ENCODE measurements at regions of chr1 and their contacts with region 1.

Region 1: GRCh38 chr1:32485554-32486255 is 20.8 kb downstream of the ZBTB8B start:
- DNase-seq: no peak
- ATAC-seq: no peak
- H3K4me3 ChIP-seq: no peak overlapping the region
- H3K27ac ChIP-seq: no peak overlapping the region
- H3K4me1 ChIP-seq: peaks cover 12% of the 10 kb centered on the region
- H3K27me3 ChIP-seq: no peaks in the 10 kb centered on the region
- CTCF ChIP-seq: no peak

Region 2: DNA sequence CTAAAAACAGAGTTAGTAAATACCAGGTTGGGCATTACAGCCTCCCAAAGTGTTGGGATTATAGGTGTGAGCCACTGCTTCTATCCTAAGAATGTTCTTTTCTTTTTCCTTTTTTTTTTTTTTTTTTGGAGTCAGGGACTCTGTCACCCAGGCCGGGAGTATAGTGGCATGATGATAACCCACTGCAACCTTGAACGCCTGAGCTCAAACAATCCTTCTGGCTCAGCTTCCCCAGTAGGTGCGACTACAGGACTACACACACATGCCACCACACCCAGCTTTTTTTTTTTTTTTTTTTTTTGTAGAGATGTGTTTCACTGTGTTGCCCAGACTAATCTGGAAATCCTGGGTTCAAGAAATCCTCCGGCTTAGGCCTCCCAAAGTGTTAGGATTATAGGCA is 158.7 kb after region 1 on chr1:
- CTCF ChIA-PET with region 1: interaction called, 13 read pairs
- POLR2A ChIA-PET with region 1: no interaction called
- intact Hi-C with region 1: no loop called
- DNase-seq: no peak
- ATAC-seq: no peak
- H3K4me3 ChIP-seq: no peak overlapping the region
- H3K27ac ChIP-seq: no peak overlapping the region
- H3K4me1 ChIP-seq: peaks cover 10% of the 10 kb centered on the region; the same call in 1 of the 2 replicates
- H3K27me3 ChIP-seq: no peaks in the 10 kb centered on the region
- CTCF ChIP-seq: no peak

Measured in PC-3 (cell line).